Activated CD4-positive, alpha-beta memory T cell treated with anti-CD3 and anti-CD28 coated beads, Interleukin-2, amount 10 ng/mL, durations not matched to agents 7 days and 5 days (primary cell): ENCODE measurements at regions of chr5 and their contacts with region 1.

Region 1: GRCh38 chr5:142922223-142922952 is 152.2 kb downstream of the ARHGAP26 start:
- DNase-seq: no peak
- H3K4me3 Mint-ChIP-seq: no peak overlapping the region
- H3K27ac Mint-ChIP-seq: no peak overlapping the region
- H3K4me1 Mint-ChIP-seq: peaks cover 36% of the 10 kb centered on the region
- H3K27me3 Mint-ChIP-seq: no peaks in the 10 kb centered on the region

Region 2: DNA sequence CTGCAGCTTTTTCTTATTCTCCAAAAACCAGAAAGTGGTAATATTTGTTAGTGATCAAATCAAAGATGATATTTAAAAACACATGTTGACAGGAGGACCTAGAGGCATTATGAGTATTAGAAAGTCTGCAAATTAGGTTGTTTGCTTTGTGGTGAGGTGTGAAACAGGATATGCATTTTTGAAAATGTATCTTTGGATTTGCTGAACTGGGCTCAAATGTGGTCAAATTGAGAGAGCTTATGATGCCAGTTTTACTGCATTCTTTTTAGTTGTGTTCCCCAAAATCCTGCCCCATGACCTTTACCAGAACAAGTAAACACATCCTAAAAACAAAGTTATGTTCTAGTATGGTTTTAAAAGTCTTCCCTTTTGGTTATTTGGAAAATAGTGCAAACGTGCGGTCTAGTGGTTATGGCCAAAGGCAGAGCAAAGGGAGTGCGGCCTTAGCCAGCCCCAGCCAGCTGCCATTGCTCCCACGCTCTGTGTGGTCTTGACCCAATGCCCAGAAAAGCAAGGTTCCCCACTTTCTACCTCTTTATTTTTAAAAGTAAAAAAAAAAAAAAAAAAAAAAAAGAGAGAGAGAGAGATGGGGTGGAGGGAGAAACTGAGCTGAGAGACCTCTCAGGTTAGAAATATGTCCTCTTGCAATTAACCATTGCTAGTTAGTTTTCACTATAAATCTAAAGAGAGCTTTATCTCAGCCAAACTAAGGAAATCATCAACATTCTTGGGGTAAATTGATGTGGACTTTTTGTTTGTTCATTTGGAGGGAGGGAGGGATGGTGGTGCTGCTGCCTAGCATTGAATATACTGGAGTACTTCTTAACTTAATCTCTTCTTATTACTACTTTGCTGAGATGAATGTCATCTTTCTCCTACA is 24.4 kb after region 1 on chr5:
- CTCF ChIA-PET with region 1: no interaction called
- POLR2A ChIA-PET with region 1: no interaction called
- DNase-seq: no peak
- H3K4me3 Mint-ChIP-seq: no peak overlapping the region
- H3K27ac Mint-ChIP-seq: no peak overlapping the region
- H3K4me1 Mint-ChIP-seq: peaks cover 14% of the 10 kb centered on the region
- H3K27me3 Mint-ChIP-seq: no peaks in the 10 kb centered on the region

Region 3: DNA sequence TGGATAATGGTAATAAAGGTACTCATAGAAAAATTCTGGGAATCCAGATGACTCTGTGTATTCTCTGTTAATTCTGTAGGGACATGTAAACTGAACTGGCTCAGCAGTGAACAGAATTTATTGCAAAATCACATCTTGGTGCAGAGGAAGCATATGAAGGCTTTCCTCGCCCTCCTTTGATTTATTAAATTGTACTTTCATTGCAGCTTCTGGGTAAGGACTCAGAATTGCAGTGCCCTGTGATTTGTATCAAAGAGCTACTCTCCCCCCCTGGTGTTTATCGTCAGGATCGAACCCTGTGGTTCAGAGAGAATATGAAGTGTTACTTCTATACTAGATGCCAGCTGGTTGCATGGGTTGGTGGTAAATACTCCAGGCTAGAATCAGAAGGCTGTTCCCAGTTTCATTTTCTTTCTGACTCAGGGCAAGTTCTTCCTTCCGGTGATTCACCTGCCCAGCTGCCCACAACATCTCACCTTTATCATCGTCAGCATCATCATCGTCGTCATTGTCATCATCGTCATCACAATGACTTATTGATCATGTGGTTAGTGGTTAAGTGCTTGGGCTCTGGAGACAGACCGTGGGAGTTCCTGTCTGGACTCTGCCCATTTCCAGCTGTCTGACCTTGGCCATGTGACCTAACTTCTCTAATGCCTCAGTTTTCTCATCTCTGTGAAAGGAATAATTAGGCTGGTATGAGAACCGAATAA is 86.6 kb after region 1 on chr5:
- CTCF ChIA-PET with region 1: interaction called, 13 read pairs
- POLR2A ChIA-PET with region 1: no interaction called
- DNase-seq: peak; percentile 89
- H3K4me3 Mint-ChIP-seq: peak overlapping the region; percentile 19
- H3K27ac Mint-ChIP-seq: peak overlapping the region; percentile 70
- H3K4me1 Mint-ChIP-seq: peaks cover 67% of the 10 kb centered on the region
- H3K27me3 Mint-ChIP-seq: no peaks in the 10 kb centered on the region